ENCODE measurements at regions of chr7 and their contacts with region 1.

Region 1: DNA sequence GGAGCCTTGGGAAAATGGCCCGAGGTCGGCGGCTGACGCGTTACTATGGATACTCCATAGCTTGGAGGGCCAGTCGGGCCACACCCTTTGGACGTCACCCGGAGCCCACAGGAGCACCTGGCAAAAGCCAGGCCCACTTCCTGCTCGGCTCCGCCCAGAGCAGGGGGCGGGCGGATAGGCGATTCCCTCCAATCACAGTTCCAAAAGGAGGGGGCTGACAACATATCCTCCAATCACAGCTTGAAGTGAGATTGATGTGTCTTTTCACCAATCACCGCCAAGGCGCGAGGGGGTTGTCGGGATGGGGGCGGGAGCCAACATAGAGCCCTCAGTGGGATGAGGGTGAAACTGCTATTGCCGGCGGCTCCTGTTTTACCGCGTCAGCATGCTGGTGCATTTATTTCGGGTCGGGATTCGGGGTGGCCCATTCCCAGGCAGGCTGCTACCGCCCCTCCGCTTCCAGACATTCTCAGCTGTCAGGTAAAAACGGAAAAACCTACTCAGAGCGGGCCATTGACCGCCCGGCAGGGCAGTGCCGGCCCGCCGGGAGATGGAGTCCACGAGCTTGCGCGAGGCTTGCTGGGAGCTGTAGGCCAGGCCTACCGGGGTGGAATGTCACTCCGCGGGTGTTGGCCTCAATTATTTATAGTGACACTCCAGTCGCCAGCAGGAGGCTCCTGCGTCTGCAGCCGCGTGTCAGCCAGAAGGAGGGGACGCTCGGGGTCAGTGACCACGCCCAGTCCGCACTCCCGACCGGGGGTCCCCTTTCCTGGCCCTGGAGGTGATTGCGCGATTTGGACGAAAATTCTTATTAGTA is at the start of gene ABCB8:
- DNase-seq: peak; percentile 100
- H3K4me3 ChIP-seq: peak within 1 kb of the TSS; percentile 84 to 85
- H3K27ac ChIP-seq: peak within 1 kb of the TSS; percentile 69 to 90
- H3K4me1 ChIP-seq: peaks cover 7 to 10% of the 10 kb centered on the region in 2 experiments; a peak in 2 of 4 replicates
- H3K27me3 ChIP-seq: no peaks in the 10 kb centered on the region
- CTCF ChIP-seq: peak; percentile 59
- EP300 ChIP-seq: no peak
- RAD21 ChIP-seq: peak; percentile 83
- polyA plus RNA-seq, gene ABCB8: 36.0 and 38.3 TPM in 2 replicates

Region 2: DNA sequence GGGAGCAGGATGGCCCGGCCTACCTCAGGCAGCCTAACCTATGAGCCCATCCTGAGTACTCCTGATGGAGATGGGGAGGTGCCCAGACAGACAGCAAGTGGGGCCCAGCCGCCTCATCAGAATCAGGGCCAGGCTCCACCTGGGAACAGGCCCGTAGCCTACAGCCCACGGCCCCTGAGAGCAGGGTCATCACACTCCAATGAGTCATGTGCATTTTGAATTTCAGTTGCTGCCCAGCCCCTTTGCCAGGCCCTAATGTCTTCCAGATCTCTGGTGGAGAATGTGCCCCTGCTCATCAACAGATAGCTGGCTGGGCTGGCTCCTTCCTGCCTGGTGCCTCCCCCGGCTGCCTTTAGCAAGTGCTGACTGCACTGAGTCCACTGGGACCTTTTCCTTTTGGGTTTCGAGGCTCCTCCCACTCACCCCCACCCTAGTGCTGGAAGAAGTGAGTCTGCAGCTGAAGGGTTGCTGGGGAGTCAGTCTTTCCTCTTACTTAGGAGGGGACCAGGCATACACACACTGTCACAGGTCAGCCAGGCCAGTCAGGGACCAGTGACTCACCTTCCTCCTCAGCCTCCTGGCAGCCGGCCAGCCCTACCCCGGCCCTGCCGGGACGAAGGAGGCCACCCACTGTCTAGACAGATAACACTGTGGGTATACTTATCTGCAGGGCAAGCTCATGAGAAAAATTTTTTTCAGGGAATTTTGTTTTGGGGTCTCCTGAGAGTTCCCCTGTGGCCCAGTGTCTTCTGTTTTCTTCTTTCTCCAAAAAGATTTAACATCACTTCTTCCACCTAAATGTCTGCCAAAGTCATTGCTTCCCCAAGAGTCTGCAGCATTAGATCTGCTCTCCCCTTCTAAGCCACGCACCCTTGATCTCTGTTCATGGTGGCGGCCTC is 10.9 kb after region 1 on chr7:
- CTCF ChIA-PET with region 1: interaction called, 15 read pairs
- POLR2A ChIA-PET with region 1: interaction called, 12 read pairs
- DNase-seq: peak; percentile 87
- H3K4me3 ChIP-seq: no peak overlapping the region
- H3K27ac ChIP-seq: peak overlapping the region; percentile 98
- H3K4me1 ChIP-seq: peaks cover 25 to 30% of the 10 kb centered on the region in 2 experiments
- H3K27me3 ChIP-seq: no peaks in the 10 kb centered on the region
- CTCF ChIP-seq: no peak
- EP300 ChIP-seq: peak in 1 of 2 experiments; percentile 77; a peak in 1 of 4 replicates
- RAD21 ChIP-seq: peak; percentile 23; the same call in 1 of the 2 replicates

Region 3: GRCh38 chr7:151085691-151086620 is 57.6 kb after region 1 on chr7 and contains the start of gene AGAP3:
- CTCF ChIA-PET with region 1: interaction called, 14 read pairs
- POLR2A ChIA-PET with region 1: interaction called, 7 read pairs
- DNase-seq: peak; percentile 99
- H3K4me3 ChIP-seq: peak within 1 kb of the TSS; percentile 90 to 100
- H3K27ac ChIP-seq: peak within 1 kb of the TSS; percentile 64 to 94
- H3K4me1 ChIP-seq: peaks cover 34 to 58% of the 10 kb centered on the region in 2 experiments
- H3K27me3 ChIP-seq: no peaks in the 10 kb centered on the region
- CTCF ChIP-seq: no peak
- EP300 ChIP-seq: peak in 1 of 2 experiments; percentile 25; a peak in 1 of 4 replicates
- RAD21 ChIP-seq: no peak
- polyA plus RNA-seq, gene AGAP3: 108 and 126 TPM in 2 replicates

Region 4: GRCh38 chr7:151152643-151153513 is 124.5 kb after region 1 on chr7:
- CTCF ChIA-PET with region 1: no interaction called
- POLR2A ChIA-PET with region 1: no interaction called
- DNase-seq: no peak
- H3K4me3 ChIP-seq: no peak overlapping the region
- H3K27ac ChIP-seq: no peak overlapping the region
- H3K4me1 ChIP-seq: no peaks in the 10 kb centered on the region
- H3K27me3 ChIP-seq: peaks cover 37% of the 10 kb centered on the region; the same call in 1 of the 2 replicates
- CTCF ChIP-seq: peak; percentile 31; the same call in 1 of the 2 replicates
- EP300 ChIP-seq: no peak
- RAD21 ChIP-seq: no peak